ENCODE measurements at regions of chr2 and their contacts with region 1.

Region 1: DNA sequence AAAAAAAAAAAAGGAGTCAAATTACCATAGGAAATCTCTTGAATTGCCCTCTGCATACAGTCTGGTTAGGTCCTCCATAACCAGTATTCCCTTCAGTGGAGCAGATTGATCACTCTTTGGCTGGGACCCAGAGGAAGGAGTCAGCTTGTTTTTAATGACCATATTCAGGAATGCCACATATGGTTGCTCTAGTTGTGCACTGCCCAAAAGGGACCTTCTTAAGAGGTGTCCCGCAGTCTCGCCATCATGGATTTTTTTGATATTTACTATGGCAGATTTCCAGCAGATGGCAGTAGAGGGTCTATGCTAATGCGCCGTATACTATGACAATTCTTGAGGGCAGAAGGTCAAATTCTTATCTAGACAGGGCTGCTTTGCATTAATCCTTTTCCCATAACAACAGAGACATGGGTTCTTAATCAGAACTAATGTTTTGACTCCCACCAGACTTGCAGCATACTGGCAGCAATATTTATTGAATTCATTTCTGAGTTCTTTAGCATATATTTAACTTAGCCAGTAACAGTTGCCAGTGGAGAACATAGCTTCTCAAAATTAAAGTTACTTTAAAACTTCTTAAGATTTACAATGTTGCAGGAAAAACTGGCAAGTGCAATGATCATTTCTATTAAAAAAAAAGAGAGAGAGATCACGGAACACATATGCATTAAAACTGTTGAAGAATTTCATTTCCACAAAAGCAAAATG is 31.8 kb upstream of the INPP4A start:
- DNase-seq: peak in 2 of 10 donors; percentile 18 to 21

Region 2: DNA sequence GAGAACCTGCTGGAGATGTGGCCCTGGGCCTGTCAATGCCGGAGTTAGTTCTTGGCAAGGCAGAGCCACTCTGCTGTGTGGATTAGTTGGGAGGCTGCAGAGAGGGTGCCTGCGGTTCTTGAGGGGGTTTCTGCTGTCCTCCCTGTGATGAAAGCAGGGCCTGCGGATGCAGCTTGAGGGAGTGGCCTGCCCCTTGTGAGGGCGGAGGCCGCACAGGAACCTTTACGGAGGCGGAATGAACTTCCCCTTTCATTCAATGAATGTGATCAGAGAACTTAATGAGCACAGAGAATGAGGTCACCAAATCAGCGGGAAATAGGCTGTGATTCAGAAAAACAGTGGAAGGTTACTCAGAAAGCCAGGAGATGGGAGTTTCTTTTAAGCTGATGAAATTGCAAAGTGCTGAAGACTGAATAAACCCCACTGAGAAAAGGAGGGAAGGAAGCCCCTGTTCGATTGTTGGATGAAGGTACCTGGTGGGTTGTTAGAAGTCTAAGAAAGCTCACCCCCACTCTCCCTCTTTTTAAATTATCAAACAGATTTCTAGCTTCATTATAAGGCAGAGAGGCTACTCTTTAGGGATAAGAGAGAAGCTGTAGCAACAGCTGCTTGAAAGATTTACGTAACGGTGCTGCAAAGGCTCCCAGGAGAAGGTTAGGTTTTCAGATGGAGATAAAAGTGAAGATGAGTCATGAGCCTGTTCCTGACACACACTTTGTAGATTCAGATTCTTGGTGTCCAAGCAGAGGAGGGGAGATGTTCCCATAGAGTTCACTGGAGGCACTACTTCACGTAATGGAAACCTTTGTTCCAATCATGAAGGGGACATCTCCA is 278.5 kb before region 1 on chr2:
- intact Hi-C with region 1: no loop called
- DNase-seq: no peak

Region 3: DNA sequence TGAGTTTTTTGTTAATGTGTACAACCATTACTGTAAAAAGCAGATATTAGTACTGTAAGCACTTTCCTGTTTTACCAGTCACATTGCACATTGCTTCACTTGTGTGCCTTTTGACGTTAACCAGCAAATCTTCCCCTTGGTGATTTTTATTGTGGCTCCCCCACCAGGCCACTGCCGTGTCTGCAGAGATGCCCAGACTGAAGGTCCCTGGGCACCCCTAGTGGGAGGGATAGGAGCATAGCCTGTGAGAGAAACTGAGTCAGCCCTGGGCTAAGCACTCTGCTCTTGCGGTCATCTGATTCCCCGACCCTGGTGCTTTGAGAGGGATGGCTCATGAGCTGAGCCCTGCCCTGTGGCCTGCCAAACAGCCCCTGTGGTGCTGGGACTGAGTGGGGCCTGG is 105.2 kb after region 1 on chr2:
- intact Hi-C with region 1: loop called (anchors 2 kb)
- DNase-seq: no peak

Region 4: DNA sequence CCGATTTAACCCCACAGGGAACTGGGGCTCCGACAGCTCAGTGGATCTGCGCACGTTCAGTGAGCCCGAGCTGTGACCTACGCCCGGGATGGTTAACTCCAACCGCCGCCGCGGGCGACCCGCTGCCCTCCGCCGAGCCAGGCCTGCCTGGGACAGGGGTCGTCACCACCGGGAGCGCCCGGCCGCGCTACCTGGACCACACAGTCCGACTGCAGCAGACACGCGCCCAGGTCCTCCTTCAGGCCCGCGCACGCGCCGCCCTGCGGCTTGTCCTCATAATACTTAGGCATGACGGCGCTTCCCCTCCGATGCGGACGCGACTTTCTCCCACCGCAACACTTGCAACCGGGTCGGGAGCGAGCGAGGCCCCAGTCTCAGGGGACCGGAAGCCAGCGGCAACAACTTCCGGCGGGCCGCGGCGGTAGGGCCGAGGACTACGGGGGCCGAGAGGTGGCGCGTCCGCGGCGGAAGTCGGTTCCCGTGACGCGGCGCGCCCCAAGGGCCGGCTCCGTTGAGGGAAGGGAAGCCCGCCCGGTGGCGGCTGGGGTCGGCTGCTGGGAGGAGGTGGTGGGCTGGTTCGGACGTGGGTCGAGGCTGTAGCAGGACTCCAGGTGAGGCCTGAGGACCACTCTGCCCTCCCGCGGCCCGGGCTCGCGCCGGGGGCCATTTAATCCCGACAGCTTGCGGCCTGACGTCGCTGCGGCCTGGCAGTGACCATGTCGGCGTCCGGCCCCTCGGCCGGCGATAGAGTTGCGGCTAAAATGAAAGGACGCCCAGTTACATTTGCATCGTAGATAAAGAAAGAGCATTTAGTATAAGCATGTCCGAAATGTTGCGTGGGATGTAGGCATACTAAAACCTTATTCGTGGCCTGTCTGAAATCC is 195.5 kb after region 1 on chr2 and contains the starts of genes COA5 and UNC50:
- intact Hi-C with region 1: loop called (anchors 5 kb)
- DNase-seq: peak; percentile 80 to 97 (median 87)

Region 5: GRCh38 chr2:98835831-98836385 is 423.0 kb after region 1 on chr2:
- intact Hi-C with region 1: loop called (anchors 5 kb)
- DNase-seq: no peak

Region 6: DNA sequence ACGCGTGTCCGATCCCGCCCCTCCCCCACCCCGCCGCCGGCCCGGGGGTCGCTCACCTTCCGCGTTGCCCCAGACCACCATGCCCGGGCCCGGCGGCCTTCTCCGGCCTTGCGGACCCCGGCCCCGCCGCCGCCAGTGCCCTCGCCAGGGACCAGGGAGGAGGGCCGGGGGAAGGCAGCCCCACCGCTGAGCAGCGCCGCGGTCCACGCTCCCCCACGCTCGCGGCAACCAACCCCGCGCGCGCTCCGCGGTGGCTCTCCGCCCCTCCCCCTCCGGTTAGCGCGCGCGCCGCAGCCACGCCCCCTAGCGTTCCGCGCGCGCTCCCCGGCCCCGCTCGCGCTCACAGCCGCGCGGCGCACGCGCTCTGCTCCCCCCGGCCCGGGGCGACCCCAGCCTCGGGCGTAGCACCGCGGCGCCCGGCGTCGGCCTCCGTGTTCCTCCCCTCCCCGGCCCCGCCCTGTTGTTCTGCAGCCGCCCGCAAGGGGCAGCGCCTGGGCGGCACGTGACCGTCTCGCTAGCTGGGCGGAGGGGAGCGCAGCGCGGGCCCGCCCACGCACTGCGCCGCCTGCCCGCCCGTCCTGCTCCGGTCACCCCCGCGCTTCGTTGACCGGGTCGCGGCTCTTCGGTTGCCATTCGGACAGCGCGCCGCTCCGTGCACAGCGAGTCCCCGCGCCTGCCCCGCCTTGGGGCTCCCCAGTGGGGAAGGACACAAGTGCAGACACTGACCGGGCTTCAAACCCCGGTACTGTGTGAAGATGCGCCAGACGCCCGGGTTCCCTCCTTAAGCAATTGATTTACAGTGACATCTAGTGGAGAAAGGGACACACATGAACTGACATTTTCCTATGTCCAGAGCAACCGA is 1077.1 kb after region 1 on chr2 and contains the start of gene REV1:
- intact Hi-C with region 1: no loop called
- DNase-seq: peak; percentile 77 to 98 (median 88)